SK-N-SH (cell line): ENCODE measurements at regions of chr7 and their contacts with region 1.

Region 1: GRCh38 chr7:25389489-25390106 is 161.3 kb upstream of the NPVF start:
- DNase-seq: peak; percentile 68
- H3K4me3 ChIP-seq: no peak overlapping the region
- H3K27ac ChIP-seq: no peak overlapping the region
- H3K4me1 ChIP-seq: peaks cover 0 to 20% of the 10 kb centered on the region in 2 experiments; a peak in 2 of 4 replicates
- H3K27me3 ChIP-seq: no peaks in the 10 kb centered on the region
- CTCF ChIP-seq: peak; percentile 73
- EP300 ChIP-seq: no peak
- RAD21 ChIP-seq: peak; percentile 88

Region 2: GRCh38 chr7:25240340-25240739 is 149.3 kb before region 1 on chr7:
- CTCF ChIA-PET with region 1: interaction called, 13 read pairs
- POLR2A ChIA-PET with region 1: no interaction called
- DNase-seq: no peak
- H3K4me3 ChIP-seq: no peak overlapping the region
- H3K27ac ChIP-seq: no peak overlapping the region
- H3K4me1 ChIP-seq: no peaks in the 10 kb centered on the region
- H3K27me3 ChIP-seq: no peaks in the 10 kb centered on the region; the same call in 1 of the 2 replicates
- CTCF ChIP-seq: no peak
- EP300 ChIP-seq: no peak
- RAD21 ChIP-seq: no peak

Region 3: GRCh38 chr7:25288556-25289307 is 100.9 kb before region 1 on chr7:
- CTCF ChIA-PET with region 1: interaction called, 11 read pairs
- POLR2A ChIA-PET with region 1: no interaction called
- DNase-seq: no peak
- H3K4me3 ChIP-seq: no peak overlapping the region
- H3K27ac ChIP-seq: no peak overlapping the region
- H3K4me1 ChIP-seq: no peaks in the 10 kb centered on the region
- H3K27me3 ChIP-seq: no peaks in the 10 kb centered on the region
- CTCF ChIP-seq: no peak
- EP300 ChIP-seq: no peak
- RAD21 ChIP-seq: no peak

Region 4: GRCh38 chr7:25375805-25376600 is 13.6 kb before region 1 on chr7:
- CTCF ChIA-PET with region 1: interaction called, 54 read pairs
- POLR2A ChIA-PET with region 1: no interaction called
- DNase-seq: no peak
- H3K4me3 ChIP-seq: no peak overlapping the region
- H3K27ac ChIP-seq: no peak overlapping the region
- H3K4me1 ChIP-seq: no peaks in the 10 kb centered on the region
- H3K27me3 ChIP-seq: no peaks in the 10 kb centered on the region
- CTCF ChIP-seq: no peak
- EP300 ChIP-seq: no peak
- RAD21 ChIP-seq: no peak

Region 5: DNA sequence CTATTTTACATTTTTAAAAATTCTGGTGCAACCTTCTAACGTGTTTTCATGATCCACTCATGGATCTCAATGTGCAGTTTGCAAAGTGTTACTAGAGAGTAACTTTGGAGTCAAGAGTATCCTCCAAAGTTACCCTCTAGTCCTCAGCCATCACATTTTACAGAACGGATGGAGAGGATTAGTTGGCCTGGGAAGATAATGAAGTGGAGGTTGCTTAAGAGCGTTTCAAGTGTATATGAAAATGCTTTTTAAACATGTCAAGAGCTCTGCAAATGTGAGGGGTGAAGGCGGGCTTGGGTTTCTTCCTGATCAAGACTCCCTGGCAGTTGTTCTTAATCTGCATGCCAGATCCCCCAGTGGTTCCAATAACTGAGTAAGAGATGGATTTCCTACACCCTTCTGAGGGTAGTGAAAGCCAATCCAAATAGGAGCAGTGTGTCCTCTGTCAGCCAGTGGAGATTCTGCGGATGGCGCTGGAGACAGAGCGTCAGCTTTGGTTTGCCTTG is 138.1 kb after region 1 on chr7:
- CTCF ChIA-PET with region 1: interaction called, 19 read pairs
- POLR2A ChIA-PET with region 1: no interaction called
- DNase-seq: no peak
- H3K4me3 ChIP-seq: no peak overlapping the region
- H3K27ac ChIP-seq: no peak overlapping the region
- H3K4me1 ChIP-seq: no peaks in the 10 kb centered on the region
- H3K27me3 ChIP-seq: no peaks in the 10 kb centered on the region
- CTCF ChIP-seq: no peak
- EP300 ChIP-seq: no peak
- RAD21 ChIP-seq: no peak